Psoas muscle (tissue), 8 donors: ENCODE measurements at regions of chr10 and their contacts with region 1.

Region 1: DNA sequence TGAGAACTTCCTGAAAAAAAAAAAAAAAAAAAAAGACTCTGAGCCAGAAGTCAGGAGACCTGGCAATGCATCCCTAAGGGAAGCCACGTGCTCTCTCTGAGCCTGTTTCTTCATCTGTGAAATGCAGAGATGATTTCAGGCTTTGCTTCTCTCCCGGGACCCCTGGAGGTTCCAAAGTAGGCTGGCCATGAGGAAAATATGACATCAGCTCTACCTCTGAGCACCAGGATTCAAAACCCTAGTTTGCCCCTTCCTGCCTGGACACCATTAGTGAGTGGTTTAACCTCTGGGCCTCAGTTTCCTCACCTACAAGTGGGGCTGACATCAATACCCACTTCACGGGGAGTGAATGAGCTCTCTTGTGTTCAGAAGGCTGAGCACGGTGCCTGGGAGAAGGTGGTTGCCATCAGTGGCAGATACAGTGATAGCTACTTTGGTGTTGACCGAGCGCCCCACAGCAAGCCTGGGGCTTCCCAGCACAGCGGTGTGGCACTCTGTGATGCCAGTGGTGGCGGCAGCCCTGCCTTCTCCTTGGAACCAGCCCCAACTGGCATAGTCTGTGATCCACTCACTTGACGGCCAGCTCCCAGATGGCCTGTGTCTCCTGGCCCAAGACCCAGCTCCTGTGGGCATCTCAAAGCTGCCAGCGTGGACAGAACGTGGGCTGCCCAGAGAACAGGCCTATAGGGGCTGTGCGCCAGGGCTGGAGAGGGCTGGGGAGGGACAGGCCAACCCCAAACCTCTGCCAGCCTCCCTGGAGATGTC is 153.1 kb upstream of the UNC5B start:
- DNase-seq: peak; percentile 32 to 66
- ATAC-seq: peak; percentile 70 to 93 (median 84)
- H3K4me3 ChIP-seq: no peak overlapping the region
- H3K27ac ChIP-seq: no peak overlapping the region
- H3K4me1 ChIP-seq: peaks cover 7% of the 10 kb centered on the region
- H3K27me3 ChIP-seq: no peaks in the 10 kb centered on the region
- CTCF ChIP-seq: no peak

Region 2: DNA sequence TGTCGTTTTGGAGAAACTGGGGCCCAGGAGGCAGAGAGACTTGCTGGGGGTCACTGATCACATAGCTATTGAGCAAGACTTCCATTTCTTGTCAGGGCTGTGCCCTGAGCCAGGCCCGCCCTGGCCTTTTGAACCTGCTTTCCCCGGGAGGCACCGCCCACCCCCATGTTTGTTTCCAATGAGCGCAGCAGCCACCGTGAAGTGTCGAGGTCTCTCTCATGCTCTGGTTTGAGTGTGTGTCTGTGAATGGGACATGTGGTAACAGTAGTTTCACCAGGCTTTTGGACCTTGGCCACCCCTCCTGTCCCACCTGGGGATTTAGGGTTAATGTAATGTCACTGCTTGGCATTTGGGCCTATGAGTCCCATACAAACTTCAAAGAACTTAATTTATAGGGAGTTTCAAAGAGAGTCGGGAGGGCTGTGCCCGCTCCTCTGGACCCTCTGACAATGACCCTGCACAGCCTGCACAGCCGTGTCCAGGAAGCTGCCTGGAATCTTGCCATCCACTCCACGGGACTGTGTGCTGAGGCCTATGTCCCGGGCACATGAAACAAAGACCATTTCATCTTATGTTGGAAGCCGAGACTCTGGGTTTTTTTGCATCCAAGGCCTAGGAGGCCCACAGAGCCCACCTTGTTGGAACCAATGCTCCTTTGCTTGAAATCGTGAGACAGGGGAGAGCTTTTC is 463.0 kb before region 1 on chr10:
- intact Hi-C with region 1: no loop called
- DNase-seq: no peak
- ATAC-seq: no peak
- H3K4me3 ChIP-seq: no peak overlapping the region
- H3K27ac ChIP-seq: no peak overlapping the region
- H3K4me1 ChIP-seq: no peaks in the 10 kb centered on the region
- H3K27me3 ChIP-seq: no peaks in the 10 kb centered on the region
- CTCF ChIP-seq: no peak

Region 3: GRCh38 chr10:71035511-71036296 is 23.5 kb before region 1 on chr10:
- intact Hi-C with region 1: loop called in 1 of 2 experiments (anchors 2 kb)
- DNase-seq: no peak
- ATAC-seq: no peak
- H3K4me3 ChIP-seq: no peak overlapping the region
- H3K27ac ChIP-seq: no peak overlapping the region
- H3K4me1 ChIP-seq: no peaks in the 10 kb centered on the region
- H3K27me3 ChIP-seq: no peaks in the 10 kb centered on the region
- CTCF ChIP-seq: no peak

Region 4: DNA sequence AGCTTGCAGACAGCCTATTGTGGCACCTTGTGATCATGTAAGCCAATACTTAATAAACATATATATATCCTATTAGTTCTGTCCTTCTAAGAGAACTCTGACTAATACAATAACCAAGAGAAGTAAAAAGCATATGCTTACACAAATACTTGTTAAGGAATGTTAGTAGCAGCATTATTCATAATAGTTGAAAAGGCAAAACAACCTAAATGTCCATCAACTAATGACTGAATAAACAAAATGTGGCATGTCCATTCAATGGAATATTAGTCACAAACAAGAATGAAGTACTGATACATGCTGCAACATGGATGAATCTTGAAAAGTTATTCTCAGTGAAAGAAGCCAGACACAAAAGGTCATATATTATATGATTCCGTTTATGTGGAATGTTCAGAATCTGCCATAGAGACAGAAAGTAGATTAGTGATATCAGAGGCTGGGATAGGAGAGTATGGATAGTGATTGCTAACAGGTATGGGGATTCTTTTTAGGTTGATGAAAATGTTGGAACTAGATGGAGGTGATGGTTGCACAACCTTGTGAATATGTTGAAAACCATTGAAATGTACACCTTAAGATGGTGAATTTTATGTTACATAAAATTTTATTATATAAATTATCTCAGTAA is 40.6 kb after region 1 on chr10:
- intact Hi-C with region 1: no loop called
- DNase-seq: no peak
- ATAC-seq: no peak
- H3K4me3 ChIP-seq: no peak overlapping the region
- H3K27ac ChIP-seq: no peak overlapping the region
- H3K4me1 ChIP-seq: no peaks in the 10 kb centered on the region
- H3K27me3 ChIP-seq: no peaks in the 10 kb centered on the region
- CTCF ChIP-seq: no peak

Region 5: GRCh38 chr10:71302874-71303568 is 243.8 kb after region 1 on chr10:
- intact Hi-C with region 1: no loop called
- DNase-seq: peak in 1 of 2 donors; percentile 18
- ATAC-seq: peak in 3 of 4 donors; percentile 48 to 72 (median 56)
- H3K4me3 ChIP-seq: no peak overlapping the region
- H3K27ac ChIP-seq: no peak overlapping the region
- H3K4me1 ChIP-seq: no peaks in the 10 kb centered on the region
- H3K27me3 ChIP-seq: no peaks in the 10 kb centered on the region
- CTCF ChIP-seq: peak; percentile 32